ENCODE measurements at regions of chr9 and their contacts with region 1.

Region 1: DNA sequence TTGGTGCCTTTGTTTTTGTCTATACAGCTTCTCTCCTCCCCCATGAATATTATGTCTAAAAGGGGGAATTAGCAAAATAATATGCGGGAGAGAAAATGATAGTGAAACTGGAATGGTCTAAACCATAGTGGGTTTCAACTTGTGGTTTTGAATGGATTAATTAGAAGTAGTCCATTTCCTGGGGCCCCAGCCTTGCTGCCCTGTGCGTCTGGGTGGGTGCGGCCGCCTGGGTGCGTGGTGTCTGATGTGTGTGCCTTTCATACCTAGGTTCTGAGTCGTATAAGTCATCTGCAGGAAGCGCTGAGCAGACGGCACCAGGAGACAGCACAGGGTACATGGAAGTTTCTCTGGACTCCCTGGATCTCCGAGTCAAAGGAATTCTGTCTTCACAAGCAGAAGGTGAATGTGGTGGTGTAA is 120.0 kb upstream of the CACNA1B start:
- DNase-seq: peak in 1 of 2 donors; percentile 43
- ATAC-seq: peak; percentile 57 to 85 (median 71)
- H3K4me3 ChIP-seq: no peak overlapping the region
- H3K4me3 Mint-ChIP-seq: peak overlapping the region; percentile 62
- H3K27ac ChIP-seq: peak overlapping the region; percentile 65
- H3K27ac Mint-ChIP-seq: peak overlapping the region; percentile 85 to 90
- H3K4me1 ChIP-seq: peaks cover 38% of the 10 kb centered on the region
- H3K4me1 Mint-ChIP-seq: peaks cover 47 to 49% of the 10 kb centered on the region in 2 donors
- H3K27me3 ChIP-seq: no peaks in the 10 kb centered on the region
- H3K27me3 Mint-ChIP-seq: no peaks in the 10 kb centered on the region
- CTCF ChIP-seq: no peak

Region 2: DNA sequence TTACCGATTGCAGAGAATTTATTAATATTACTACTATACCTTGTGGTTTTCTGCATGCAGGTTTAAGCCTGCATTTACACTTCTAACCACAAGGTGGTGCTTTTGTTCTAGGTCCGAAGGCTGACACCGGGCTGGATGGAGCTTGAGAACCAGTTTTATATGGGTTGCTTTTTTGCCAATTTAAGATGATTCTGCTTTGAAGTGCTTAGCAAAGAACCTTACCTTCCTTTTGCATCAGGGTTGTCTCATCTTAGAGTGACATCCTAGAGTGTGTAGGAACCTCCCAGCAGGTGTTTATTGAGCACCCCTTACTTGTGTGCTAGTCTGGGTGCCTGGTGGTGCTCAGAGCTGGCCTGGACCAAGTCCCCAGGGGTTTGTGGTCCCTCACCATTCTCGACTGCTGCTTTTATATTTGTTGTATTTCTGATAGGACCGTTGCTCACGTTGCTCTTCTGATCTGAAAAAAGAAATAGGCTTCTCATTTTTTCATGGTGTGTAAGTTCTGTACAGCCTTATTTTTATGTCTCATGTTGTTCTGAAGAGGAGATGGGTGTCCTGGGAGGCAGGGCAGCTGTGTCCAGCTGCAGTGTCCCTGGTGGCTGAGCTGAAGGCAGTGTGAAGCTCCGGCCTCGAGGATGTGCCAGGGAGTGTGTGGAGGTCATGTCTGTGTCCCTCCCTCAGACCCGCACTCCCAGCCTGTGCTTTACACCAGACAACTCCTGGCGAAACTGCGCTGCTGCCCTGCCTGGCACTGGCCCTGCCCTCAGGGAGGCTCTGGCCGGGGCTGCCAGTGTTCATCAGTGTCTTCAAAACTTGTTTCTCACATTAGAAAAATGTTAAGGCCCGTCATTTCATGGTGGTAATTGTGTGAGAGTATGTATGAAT is 84.5 kb before region 1 on chr9:
- intact Hi-C with region 1: loop called (anchors 10 kb)
- DNase-seq: peak in 1 of 2 donors; percentile 78
- ATAC-seq: peak; percentile 85 to 97 (median 85)
- H3K4me3 ChIP-seq: no peak overlapping the region
- H3K4me3 Mint-ChIP-seq: no peak overlapping the region
- H3K27ac ChIP-seq: no peak overlapping the region
- H3K27ac Mint-ChIP-seq: peak overlapping the region; percentile 21 to 39
- H3K4me1 ChIP-seq: peaks cover 16% of the 10 kb centered on the region
- H3K4me1 Mint-ChIP-seq: peaks cover 47 to 61% of the 10 kb centered on the region in 2 donors
- H3K27me3 ChIP-seq: no peaks in the 10 kb centered on the region
- H3K27me3 Mint-ChIP-seq: no peaks in the 10 kb centered on the region
- CTCF ChIP-seq: peak; percentile 94

Region 3: GRCh38 chr9:137982206-137982605 is 224.6 kb after region 1 on chr9:
- intact Hi-C with region 1: no loop called
- DNase-seq: no peak
- ATAC-seq: no peak
- H3K4me3 ChIP-seq: no peak overlapping the region
- H3K4me3 Mint-ChIP-seq: no peak overlapping the region
- H3K27ac ChIP-seq: no peak overlapping the region
- H3K27ac Mint-ChIP-seq: no peak overlapping the region
- H3K4me1 ChIP-seq: no peaks in the 10 kb centered on the region
- H3K4me1 Mint-ChIP-seq: peaks cover 0 to 5% of the 10 kb centered on the region in 2 donors
- H3K27me3 ChIP-seq: no peaks in the 10 kb centered on the region
- H3K27me3 Mint-ChIP-seq: peaks cover 7 to 18% of the 10 kb centered on the region in 2 donors
- CTCF ChIP-seq: no peak

Measured in natural killer cell (primary cell).